Dorsolateral prefrontal cortex (tissue), 120 donors: ENCODE measurements at regions of chr18 and their contacts with region 1.

Region 1: GRCh38 chr18:55069497-55069896 is 110.2 kb upstream of the CCDC68 start:
- DNase-seq: no peak
- H3K4me3 ChIP-seq: no peak overlapping the region
- H3K27ac ChIP-seq: no peak overlapping the region
- H3K27me3 ChIP-seq: no peaks in the 10 kb centered on the region
- CTCF ChIP-seq: no peak

Region 2: GRCh38 chr18:55001394-55002024 is 68.0 kb before region 1 on chr18:
- intact Hi-C with region 1: loop called in 1 of 2 experiments (anchors 10 kb)
- DNase-seq: no peak
- H3K4me3 ChIP-seq: no peak overlapping the region
- H3K27ac ChIP-seq: no peak overlapping the region
- H3K27me3 ChIP-seq: peaks cover 0 to 3% (median 0%) of the 10 kb centered on the region in 45 donors
- CTCF ChIP-seq: no peak

Region 3: GRCh38 chr18:55189972-55190371 is 120.5 kb after region 1 on chr18:
- intact Hi-C with region 1: loop called in 1 of 2 experiments (anchors 10 kb)
- DNase-seq: no peak
- H3K4me3 ChIP-seq: no peak overlapping the region
- H3K27ac ChIP-seq: no peak overlapping the region
- H3K27me3 ChIP-seq: no peaks in the 10 kb centered on the region
- CTCF ChIP-seq: no peak

Region 4: GRCh38 chr18:55289775-55290174 is 220.3 kb after region 1 on chr18:
- intact Hi-C with region 1: no loop called
- DNase-seq: no peak
- H3K4me3 ChIP-seq: no peak overlapping the region
- H3K27ac ChIP-seq: peak overlapping the region in 28 of 59 donors; percentile 0 to 80 (median 24)
- H3K27me3 ChIP-seq: no peaks in the 10 kb centered on the region
- CTCF ChIP-seq: no peak